A549 (cell line): ENCODE measurements at regions of chr17 and their contacts with region 1.

Region 1: DNA sequence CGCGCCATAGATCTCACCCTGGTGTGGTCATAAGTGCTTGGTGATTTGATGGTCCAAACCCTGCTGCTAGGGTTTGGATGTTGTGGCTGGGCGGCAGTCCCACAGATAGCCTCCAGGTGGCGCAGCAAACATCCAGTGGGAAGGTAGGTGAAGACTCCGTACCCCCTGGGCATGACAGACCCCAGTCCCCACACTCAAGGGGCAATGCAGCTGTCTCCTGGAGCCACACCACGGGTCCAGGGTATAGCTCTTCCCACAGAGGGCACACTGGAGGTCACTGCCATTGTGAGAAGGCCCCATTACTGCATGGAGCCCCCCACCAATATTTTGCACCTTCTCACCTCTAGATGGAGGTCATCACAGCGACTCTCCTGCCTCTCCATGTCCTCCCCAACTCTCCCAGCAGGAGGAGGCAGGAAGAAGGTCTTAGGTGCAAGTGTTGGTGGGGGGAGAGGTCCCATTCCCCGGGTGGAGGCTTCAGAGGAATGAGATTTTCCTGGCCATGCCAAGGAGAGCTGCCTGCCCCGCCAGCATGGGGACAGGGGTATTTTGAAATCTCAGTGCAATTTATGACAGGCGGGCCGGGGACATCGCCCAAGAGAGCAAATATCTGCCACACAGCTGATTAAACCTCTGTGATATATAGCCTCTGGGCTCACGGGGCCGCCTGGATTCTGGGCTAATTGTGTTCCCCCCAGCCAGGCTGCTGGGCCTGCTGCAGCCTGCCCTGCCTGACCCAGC is 17.1 kb upstream of the C17orf113 start:
- DNase-seq: peak; percentile 68 to 79
- ATAC-seq: peak; percentile 62 to 84
- H3K4me3 ChIP-seq: no peak overlapping the region
- H3K27ac ChIP-seq: no peak overlapping the region
- H3K4me1 ChIP-seq: peaks cover 4% of the 10 kb centered on the region; the same call in 2 of the 3 replicates
- CTCF ChIP-seq: peak; percentile 92
- EP300 ChIP-seq: no peak
- POLR2A ChIP-seq: no peak
- RAD21 ChIP-seq: peak; percentile 59 to 67

Region 2: DNA sequence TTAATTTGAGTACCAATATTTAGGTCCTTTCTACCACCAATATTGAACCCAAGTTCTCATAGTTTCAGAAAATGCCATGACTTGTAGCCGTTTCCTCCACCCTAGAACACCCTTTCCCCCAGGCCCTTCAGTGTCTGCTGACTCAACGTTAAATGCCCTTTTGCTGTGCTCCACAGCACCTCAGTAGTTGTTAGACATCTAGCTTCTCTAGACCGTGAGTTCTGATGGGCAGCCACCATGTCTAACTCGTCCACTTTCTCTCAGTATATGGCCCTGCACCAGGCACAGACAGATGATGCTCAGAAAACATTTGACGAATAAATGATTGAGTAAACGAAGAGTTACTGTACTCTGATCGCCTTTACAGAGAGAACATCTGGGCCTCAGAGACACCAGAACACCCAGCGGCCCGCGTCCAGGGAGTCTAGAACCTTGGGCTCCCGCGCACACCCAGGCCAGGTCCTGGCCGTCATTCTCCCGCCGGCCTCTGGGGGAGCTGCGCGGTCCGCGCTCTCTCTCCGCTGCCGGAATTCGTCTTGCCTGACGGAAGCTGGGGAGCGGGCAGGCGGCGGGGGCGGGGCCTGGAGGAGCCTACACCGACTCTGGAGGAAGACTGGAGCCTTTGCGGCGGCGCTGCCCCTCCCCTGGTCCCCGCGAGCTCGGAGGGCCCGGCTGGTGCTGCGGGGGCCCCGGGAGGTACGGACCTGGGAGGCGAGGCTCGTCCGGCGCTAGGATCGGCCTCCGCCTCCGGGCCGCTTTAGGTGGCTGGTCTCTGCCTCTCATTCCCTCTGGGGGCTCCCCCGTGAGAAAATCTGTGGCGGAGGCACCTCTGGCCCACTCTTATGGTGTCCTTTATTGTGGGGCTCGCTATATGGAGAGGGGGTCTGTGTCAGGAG is 47.8 kb before region 1 on chr17 and contains the start of gene NKIRAS2:
- CTCF ChIA-PET with region 1: interaction called, 66 read pairs
- POLR2A ChIA-PET with region 1: no interaction called
- DNase-seq: peak; percentile 94 to 98
- ATAC-seq: peak; percentile 72 to 80
- H3K4me3 ChIP-seq: peak within 1 kb of the TSS; percentile 93
- H3K27ac ChIP-seq: peak within 1 kb of the TSS; percentile 92 to 93
- H3K4me1 ChIP-seq: peaks cover 40% of the 10 kb centered on the region
- CTCF ChIP-seq: peak; percentile 86
- EP300 ChIP-seq: no peak
- POLR2A ChIP-seq: peak; percentile 73
- RAD21 ChIP-seq: no peak
- polyA plus RNA-seq, gene NKIRAS2: 52.2 and 54.3 TPM in 2 replicates

Region 3: GRCh38 chr17:42027961-42028790 is 39.3 kb before region 1 on chr17:
- CTCF ChIA-PET with region 1: interaction called, 66 read pairs
- POLR2A ChIA-PET with region 1: interaction called, 4 read pairs
- DNase-seq: peak; percentile 70 to 71
- ATAC-seq: peak; percentile 58 to 74
- H3K4me3 ChIP-seq: no peak overlapping the region
- H3K27ac ChIP-seq: no peak overlapping the region
- H3K4me1 ChIP-seq: peaks cover 22% of the 10 kb centered on the region
- CTCF ChIP-seq: peak; percentile 43; the same call in 2 of the 3 replicates
- EP300 ChIP-seq: no peak
- POLR2A ChIP-seq: no peak
- RAD21 ChIP-seq: peak in 1 of 2 experiments; percentile 33; a peak in 2 of 5 replicates

Region 4: GRCh38 chr17:42039794-42040763 is 27.4 kb before region 1 on chr17:
- CTCF ChIA-PET with region 1: interaction called, 28 read pairs
- POLR2A ChIA-PET with region 1: interaction called, 3 read pairs
- DNase-seq: no peak
- ATAC-seq: peak in 1 of 2 experiments; percentile 12; a peak in 2 of 6 replicates
- H3K4me3 ChIP-seq: no peak overlapping the region
- H3K27ac ChIP-seq: no peak overlapping the region
- H3K4me1 ChIP-seq: no peaks in the 10 kb centered on the region
- CTCF ChIP-seq: no peak
- EP300 ChIP-seq: no peak
- POLR2A ChIP-seq: no peak
- RAD21 ChIP-seq: no peak

Region 5: DNA sequence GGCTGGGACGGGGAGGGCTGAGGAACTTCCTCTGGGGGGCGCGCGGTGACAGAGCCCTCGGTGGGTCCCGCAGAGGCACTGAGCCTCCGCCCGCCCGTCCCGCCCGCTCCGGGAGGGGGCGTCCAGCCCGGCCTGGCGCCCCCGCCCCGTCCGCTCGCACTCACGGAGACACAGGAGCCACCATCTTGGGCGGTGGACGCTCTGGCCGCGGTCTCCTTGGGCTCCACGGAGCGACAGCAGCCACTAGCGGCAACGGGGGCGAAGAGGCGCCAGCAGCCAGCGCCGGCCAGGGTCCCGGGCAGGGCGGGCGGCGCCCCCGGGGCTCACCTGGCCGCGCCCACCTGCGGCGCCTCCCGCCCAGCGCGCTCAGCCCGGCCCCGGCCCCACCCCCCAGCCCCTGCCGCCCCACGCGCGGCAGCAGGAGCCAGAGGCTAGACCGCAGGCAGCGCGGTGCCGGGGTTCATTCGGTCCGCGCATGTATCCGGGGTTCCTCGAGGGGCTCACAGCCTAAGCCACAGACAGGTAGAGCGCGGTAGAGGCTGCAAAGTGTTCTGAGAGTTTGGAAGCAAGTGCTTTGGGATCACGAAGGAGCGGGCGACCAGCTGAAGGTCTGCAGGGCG is 17.0 kb before region 1 on chr17 and contains the start of gene C17orf113:
- CTCF ChIA-PET with region 1: interaction called, 39 read pairs
- POLR2A ChIA-PET with region 1: no interaction called
- DNase-seq: peak; percentile 61 to 89
- ATAC-seq: peak; percentile 87 to 90
- H3K4me3 ChIP-seq: peak within 1 kb of the TSS; percentile 64
- H3K27ac ChIP-seq: peak within 1 kb of the TSS; percentile 76 to 88
- H3K4me1 ChIP-seq: peaks cover 12% of the 10 kb centered on the region
- CTCF ChIP-seq: peak; percentile 82
- EP300 ChIP-seq: no peak
- POLR2A ChIP-seq: peak; percentile 62
- RAD21 ChIP-seq: peak; percentile 40 to 48; a peak in 4 of 5 replicates
- polyA plus RNA-seq, gene C17orf113: 1.0 and 1.4 TPM in 2 replicates

Region 6: GRCh38 chr17:42078396-42079043 is 11.0 kb after region 1 on chr17:
- CTCF ChIA-PET with region 1: interaction called, 85 read pairs
- POLR2A ChIA-PET with region 1: no interaction called
- DNase-seq: no peak
- ATAC-seq: no peak
- H3K4me3 ChIP-seq: no peak overlapping the region
- H3K27ac ChIP-seq: no peak overlapping the region
- H3K4me1 ChIP-seq: peaks cover 9% of the 10 kb centered on the region; the same call in 1 of the 3 replicates
- CTCF ChIP-seq: no peak
- EP300 ChIP-seq: no peak
- POLR2A ChIP-seq: no peak
- RAD21 ChIP-seq: no peak

Region 7: DNA sequence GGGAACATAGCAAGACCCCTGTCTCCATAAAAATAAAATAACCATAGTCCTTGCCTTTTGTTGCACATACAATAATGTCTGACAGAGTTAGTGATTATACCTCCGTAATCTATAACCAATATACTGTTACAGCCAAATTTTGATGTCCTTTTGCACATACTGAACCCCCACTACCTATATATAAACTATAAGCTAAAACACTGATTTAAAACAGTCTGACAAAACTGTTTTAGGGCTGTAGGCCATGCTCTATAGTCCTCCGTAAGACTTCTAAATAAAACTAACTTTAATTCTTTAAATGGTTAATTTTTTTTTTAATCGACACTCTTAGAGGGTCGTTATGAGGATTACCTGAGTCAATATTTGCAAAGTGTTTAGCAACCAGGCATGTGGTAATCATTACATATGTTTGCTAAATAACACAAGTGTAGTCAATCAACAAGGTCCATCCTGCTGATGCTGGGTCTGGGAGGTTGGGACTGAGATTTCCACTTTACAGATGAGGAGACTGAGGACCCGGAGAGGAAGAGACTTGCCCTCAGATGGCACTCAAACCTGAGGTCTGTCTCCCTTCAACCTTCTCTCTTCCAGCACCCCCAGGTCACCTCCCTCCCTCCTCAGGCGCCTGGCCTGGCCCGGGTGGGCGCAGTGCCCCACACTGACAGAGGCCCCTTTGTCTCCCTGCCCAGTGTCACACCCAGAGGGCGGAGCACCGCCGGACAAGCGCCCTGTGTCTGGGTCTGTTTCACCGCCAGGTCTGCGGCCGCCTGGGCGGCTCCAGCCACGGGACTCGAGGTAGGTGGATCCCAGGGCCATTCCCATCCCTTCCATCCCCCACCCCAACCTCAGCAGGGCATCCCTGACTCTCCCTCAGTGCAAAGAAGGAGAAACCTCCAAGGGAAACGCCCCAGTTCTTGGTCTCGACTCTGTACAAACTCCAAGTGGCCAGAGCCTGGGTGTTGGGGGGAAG is 20.5 kb after region 1 on chr17:
- CTCF ChIA-PET with region 1: interaction called, 454 read pairs
- POLR2A ChIA-PET with region 1: no interaction called
- DNase-seq: no peak
- ATAC-seq: peak; percentile 47 to 48; a peak in 5 of 6 replicates
- H3K4me3 ChIP-seq: no peak overlapping the region
- H3K27ac ChIP-seq: no peak overlapping the region
- H3K4me1 ChIP-seq: 0 out of 3 replicates have a peak, but pooled peaks cover 3% of the 10 kb centered on the region
- CTCF ChIP-seq: no peak
- EP300 ChIP-seq: no peak
- POLR2A ChIP-seq: no peak
- RAD21 ChIP-seq: no peak